ENCODE measurements at regions of chr1 and their contacts with region 1.

Region 1: GRCh38 chr1:151828965-151829698 is 2.5 kb downstream of the RORC start:
- DNase-seq: peak in 1 of 2 donors; percentile 80
- ATAC-seq: no peak
- H3K4me3 ChIP-seq: peak overlapping the region in 1 of 4 donors; percentile 84
- H3K27ac ChIP-seq: peak overlapping the region; percentile 98 to 99 (median 99)
- H3K4me1 ChIP-seq: peaks cover 58 to 75% of the 10 kb centered on the region in 2 donors
- H3K27me3 ChIP-seq: no peaks in the 10 kb centered on the region
- CTCF ChIP-seq: no peak
- POLR2A ChIP-seq: no peak

Region 2: DNA sequence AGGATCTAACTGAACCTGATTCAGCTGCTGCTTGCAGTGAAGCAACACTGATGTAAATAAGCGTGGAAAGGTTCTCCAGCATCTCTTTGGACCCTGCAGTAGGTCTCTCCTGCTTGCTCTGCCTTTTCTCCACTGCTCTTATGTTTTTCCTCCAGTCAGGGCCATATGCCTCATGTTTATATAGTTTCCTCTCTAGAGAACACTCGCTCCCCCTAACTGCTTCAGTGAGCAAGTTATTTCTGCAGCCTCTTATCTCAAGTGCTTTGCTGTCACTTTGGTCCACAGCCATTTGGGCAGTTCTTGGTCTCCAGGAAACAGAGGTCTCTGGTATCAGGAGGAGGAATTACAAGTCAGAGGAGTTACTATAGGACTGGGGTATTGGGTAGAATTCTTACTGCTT is 815.6 kb before region 1 on chr1:
- in situ Hi-C with region 1: no loop called
- intact Hi-C with region 1: loop called (anchors 10 kb)
- DNase-seq: no peak
- ATAC-seq: no peak
- H3K4me3 ChIP-seq: no peak overlapping the region
- H3K27ac ChIP-seq: peak overlapping the region in 1 of 4 donors; percentile 19
- H3K4me1 ChIP-seq: peaks cover 19 to 27% of the 10 kb centered on the region in 2 donors
- H3K27me3 ChIP-seq: no peaks in the 10 kb centered on the region
- CTCF ChIP-seq: no peak
- POLR2A ChIP-seq: no peak

Region 3: GRCh38 chr1:151311589-151312331 is 517.4 kb before region 1 on chr1:
- in situ Hi-C with region 1: no loop called
- intact Hi-C with region 1: loop called (anchors 5 kb)
- DNase-seq: peak; percentile 95 to 98
- ATAC-seq: peak; percentile 95 to 98
- H3K4me3 ChIP-seq: peak overlapping the region in 2 of 4 donors; percentile 8
- H3K27ac ChIP-seq: peak overlapping the region; percentile 91 to 95 (median 93)
- H3K4me1 ChIP-seq: peaks cover 55 to 69% of the 10 kb centered on the region in 2 donors
- H3K27me3 ChIP-seq: no peaks in the 10 kb centered on the region
- CTCF ChIP-seq: no peak
- POLR2A ChIP-seq: peak; percentile 15 to 16

Region 4: DNA sequence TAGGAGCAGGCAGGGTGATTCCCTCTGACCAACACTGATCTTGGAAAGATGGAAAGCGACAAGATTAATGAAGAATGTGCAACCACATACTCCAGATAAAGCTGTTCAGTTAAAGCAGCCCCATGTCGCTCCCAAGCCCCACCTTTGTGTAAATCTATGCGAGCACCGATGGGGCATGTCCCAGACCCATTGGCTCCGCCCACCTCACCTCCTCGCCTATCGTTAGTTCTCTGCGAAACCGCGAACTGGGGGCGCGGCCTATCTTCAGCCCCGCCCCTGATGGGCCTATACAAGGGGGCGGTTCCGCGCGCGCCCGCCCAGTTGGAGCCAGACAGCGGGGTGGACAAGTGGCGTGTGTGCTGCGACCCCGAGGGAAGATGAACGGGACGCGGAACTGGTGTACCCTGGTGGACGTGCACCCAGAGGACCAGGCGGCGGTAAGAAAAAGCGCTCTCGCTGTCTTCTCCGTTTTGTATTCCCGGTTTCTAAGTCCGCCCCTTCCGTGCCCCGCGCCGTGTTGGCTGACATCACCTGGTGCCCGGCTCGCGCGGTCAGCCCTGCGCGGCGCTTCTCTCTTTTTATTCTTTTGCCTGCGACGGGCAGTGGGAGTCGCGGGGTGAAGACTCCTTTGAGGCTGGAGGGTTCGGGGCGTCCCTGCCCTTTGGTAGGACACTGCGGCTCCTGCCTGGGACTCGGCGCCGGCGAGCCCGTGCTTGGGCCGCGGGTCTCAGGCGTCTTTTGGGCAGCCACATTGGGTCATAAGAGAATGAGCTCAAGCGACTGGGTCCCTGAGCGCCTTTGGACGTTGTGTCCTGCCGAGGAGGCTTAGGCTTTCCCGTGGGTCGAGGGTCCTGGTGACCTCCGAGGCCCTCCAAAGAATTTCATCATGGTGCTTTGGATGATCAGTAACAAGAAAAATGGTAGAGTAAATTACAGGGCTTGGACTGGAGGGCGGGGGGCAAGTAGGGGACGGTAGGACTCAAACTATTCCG is 288.8 kb before region 1 on chr1 and contains the start of gene TUFT1:
- in situ Hi-C with region 1: no loop called
- intact Hi-C with region 1: loop called (anchors 5 kb)
- DNase-seq: peak; percentile 86 to 89
- ATAC-seq: peak; percentile 94 to 96
- H3K4me3 ChIP-seq: peak within 1 kb of the TSS; percentile 65 to 84 (median 72)
- H3K27ac ChIP-seq: peak within 1 kb of the TSS; percentile 61 to 76 (median 72)
- H3K4me1 ChIP-seq: peaks cover 4 to 19% of the 10 kb centered on the region in 2 donors
- H3K27me3 ChIP-seq: no peaks in the 10 kb centered on the region
- CTCF ChIP-seq: no peak
- POLR2A ChIP-seq: peak; percentile 86 to 96
- total RNA-seq, gene TUFT1: 1.2 to 4.0 (median 2.7) TPM

Region 5: GRCh38 chr1:151611832-151612500 is 217.2 kb before region 1 on chr1 and contains the start of gene SNX27:
- in situ Hi-C with region 1: loop called in 1 of 4 experiments (anchors 25 kb)
- intact Hi-C with region 1: loop called (anchors 1 kb)
- DNase-seq: peak; percentile 93 to 94
- ATAC-seq: peak; percentile 93 to 94
- H3K4me3 ChIP-seq: peak within 1 kb of the TSS; percentile 76 to 86 (median 80)
- H3K27ac ChIP-seq: peak within 1 kb of the TSS; percentile 80 to 97 (median 94)
- H3K4me1 ChIP-seq: peaks cover 29 to 42% of the 10 kb centered on the region in 2 donors
- H3K27me3 ChIP-seq: no peaks in the 10 kb centered on the region
- CTCF ChIP-seq: no peak
- POLR2A ChIP-seq: peak; percentile 85 to 87
- total RNA-seq, gene SNX27: 37.0 to 43.7 (median 40.9) TPM

Region 6: DNA sequence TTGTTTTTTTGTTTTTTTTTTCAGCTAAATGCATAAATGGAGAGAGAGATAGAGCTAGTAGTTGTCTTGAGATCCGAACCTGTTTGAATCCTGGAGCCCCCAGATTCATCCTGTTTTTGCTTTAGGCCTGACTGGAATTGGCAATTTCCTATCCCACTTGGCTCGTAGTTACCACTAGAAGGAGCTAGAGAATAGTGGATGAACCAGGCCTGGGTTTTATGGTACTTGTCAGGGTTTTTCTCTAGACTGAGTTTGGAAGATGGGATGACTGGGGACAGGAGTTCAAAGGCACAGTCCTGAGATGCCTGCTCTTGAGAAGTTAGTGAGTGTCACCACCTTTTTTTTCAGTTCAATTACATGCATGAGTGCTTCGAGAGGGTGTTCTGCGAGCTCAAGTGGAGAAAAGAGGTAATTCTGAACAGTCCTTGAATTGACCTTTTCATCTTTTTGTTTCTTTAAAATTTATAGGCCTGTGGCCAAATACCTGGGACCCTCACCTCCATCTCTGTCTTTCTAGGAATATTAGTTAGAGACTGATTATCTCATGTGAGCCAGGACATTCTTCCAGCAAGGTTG is 136.0 kb before region 1 on chr1:
- in situ Hi-C with region 1: no loop called
- intact Hi-C with region 1: no loop called
- DNase-seq: no peak
- ATAC-seq: no peak
- H3K4me3 ChIP-seq: no peak overlapping the region
- H3K27ac ChIP-seq: no peak overlapping the region
- H3K4me1 ChIP-seq: no peaks in the 10 kb centered on the region
- H3K27me3 ChIP-seq: no peaks in the 10 kb centered on the region
- CTCF ChIP-seq: peak in 1 of 5 experiments; percentile 6
- POLR2A ChIP-seq: no peak

Region 7: GRCh38 chr1:151790071-151790940 is 38.8 kb before region 1 on chr1 and contains the start of gene TDRKH:
- in situ Hi-C with region 1: loop called in 1 of 4 experiments (anchors 5 kb)
- intact Hi-C with region 1: loop called (anchors 1 kb)
- DNase-seq: peak; percentile 99
- ATAC-seq: peak; percentile 99
- H3K4me3 ChIP-seq: peak within 1 kb of the TSS; percentile 63 to 88 (median 84)
- H3K27ac ChIP-seq: peak within 1 kb of the TSS; percentile 75 to 80 (median 80)
- H3K4me1 ChIP-seq: peaks cover 12 to 14% of the 10 kb centered on the region in 2 donors
- H3K27me3 ChIP-seq: no peaks in the 10 kb centered on the region
- CTCF ChIP-seq: peak in 3 of 5 experiments; percentile 23 to 40 (median 39)
- POLR2A ChIP-seq: peak; percentile 65 to 86
- total RNA-seq, gene TDRKH: 3.9 to 8.3 (median 4.6) TPM

Measured in gastrocnemius medialis (tissue), 4 donors.